Activated B cell treated with CpG ODN at 0.5 μM for 24 hours (primary cell): ENCODE measurements at regions of chr16 and their contacts with region 1.

Region 1: GRCh38 chr16:85986931-85987749 is 88.2 kb downstream of the IRF8 start:
- DNase-seq: peak; percentile 36
- ATAC-seq: no peak
- H3K4me3 Mint-ChIP-seq: peak overlapping the region; percentile 5
- H3K27ac Mint-ChIP-seq: peak overlapping the region; percentile 47
- H3K4me1 Mint-ChIP-seq: peaks cover 98% of the 10 kb centered on the region
- H3K27me3 Mint-ChIP-seq: no peaks in the 10 kb centered on the region
- CTCF ChIP-seq: no peak

Region 2: GRCh38 chr16:85829751-85830445 is 157.2 kb before region 1 on chr16:
- CTCF ChIA-PET with region 1: interaction called, 296 read pairs
- POLR2A ChIA-PET with region 1: interaction called, 5 read pairs
- intact Hi-C with region 1: no loop called
- DNase-seq: no peak
- ATAC-seq: no peak
- H3K4me3 Mint-ChIP-seq: peak overlapping the region; percentile 67
- H3K27ac Mint-ChIP-seq: peak overlapping the region; percentile 88
- H3K4me1 Mint-ChIP-seq: peaks cover 57% of the 10 kb centered on the region
- H3K27me3 Mint-ChIP-seq: no peaks in the 10 kb centered on the region
- CTCF ChIP-seq: no peak

Region 3: GRCh38 chr16:85935974-85936760 is 51.0 kb before region 1 on chr16:
- CTCF ChIA-PET with region 1: interaction called, 8 read pairs
- POLR2A ChIA-PET with region 1: interaction called, 42 read pairs
- intact Hi-C with region 1: loop called (anchors 1 kb)
- DNase-seq: peak; percentile 66
- ATAC-seq: peak; percentile 78
- H3K4me3 Mint-ChIP-seq: peak overlapping the region; percentile 75
- H3K27ac Mint-ChIP-seq: peak overlapping the region; percentile 98
- H3K4me1 Mint-ChIP-seq: peaks cover 90% of the 10 kb centered on the region
- H3K27me3 Mint-ChIP-seq: no peaks in the 10 kb centered on the region
- CTCF ChIP-seq: no peak

Region 4: GRCh38 chr16:85963753-85964285 is 23.3 kb before region 1 on chr16:
- CTCF ChIA-PET with region 1: interaction called, 4 read pairs
- POLR2A ChIA-PET with region 1: interaction called, 10 read pairs
- intact Hi-C with region 1: loop called (anchors 2 kb)
- DNase-seq: no peak
- ATAC-seq: no peak
- H3K4me3 Mint-ChIP-seq: no peak overlapping the region
- H3K27ac Mint-ChIP-seq: peak overlapping the region; percentile 41
- H3K4me1 Mint-ChIP-seq: peaks cover 53% of the 10 kb centered on the region
- H3K27me3 Mint-ChIP-seq: no peaks in the 10 kb centered on the region
- CTCF ChIP-seq: no peak

Region 5: DNA sequence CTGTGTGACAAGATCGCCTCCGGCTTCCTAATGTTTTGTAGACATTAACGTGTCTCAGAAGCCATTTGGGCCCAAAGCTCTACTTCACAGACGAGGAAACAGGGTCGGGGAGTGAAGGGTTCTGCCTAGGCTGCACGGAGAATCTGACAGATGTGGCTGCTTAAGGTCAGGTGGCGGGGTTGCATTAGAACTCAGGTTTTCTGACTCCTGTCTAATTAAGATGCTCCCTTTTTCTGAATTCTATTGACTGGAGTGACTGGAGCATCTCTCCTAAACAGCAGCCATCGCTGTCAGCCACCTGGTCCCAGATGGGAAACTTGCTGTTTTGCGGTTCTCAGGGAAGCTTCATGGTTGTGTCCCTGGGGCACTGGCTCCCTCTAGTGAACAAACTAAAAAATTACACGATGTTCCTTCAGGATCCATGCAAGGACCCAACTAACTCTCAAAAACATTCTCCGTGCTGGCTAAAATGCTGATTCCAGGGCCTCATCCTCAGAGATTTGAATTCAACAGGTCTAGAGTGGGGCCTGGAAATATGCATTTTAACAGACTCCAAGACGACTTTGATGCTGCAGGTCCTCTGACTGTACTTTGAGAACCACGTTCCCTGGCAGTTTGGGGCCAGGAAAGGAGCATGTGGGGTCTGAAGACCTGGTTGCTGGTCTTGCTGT is 29.2 kb after region 1 on chr16:
- CTCF ChIA-PET with region 1: interaction called, 32 read pairs
- POLR2A ChIA-PET with region 1: interaction called, 10 read pairs
- intact Hi-C with region 1: loop called (anchors 1 kb)
- DNase-seq: peak; percentile 32
- ATAC-seq: peak; percentile 60
- H3K4me3 Mint-ChIP-seq: no peak overlapping the region
- H3K27ac Mint-ChIP-seq: no peak overlapping the region
- H3K4me1 Mint-ChIP-seq: peaks cover 36% of the 10 kb centered on the region
- H3K27me3 Mint-ChIP-seq: peaks cover 6% of the 10 kb centered on the region
- CTCF ChIP-seq: no peak

Region 6: DNA sequence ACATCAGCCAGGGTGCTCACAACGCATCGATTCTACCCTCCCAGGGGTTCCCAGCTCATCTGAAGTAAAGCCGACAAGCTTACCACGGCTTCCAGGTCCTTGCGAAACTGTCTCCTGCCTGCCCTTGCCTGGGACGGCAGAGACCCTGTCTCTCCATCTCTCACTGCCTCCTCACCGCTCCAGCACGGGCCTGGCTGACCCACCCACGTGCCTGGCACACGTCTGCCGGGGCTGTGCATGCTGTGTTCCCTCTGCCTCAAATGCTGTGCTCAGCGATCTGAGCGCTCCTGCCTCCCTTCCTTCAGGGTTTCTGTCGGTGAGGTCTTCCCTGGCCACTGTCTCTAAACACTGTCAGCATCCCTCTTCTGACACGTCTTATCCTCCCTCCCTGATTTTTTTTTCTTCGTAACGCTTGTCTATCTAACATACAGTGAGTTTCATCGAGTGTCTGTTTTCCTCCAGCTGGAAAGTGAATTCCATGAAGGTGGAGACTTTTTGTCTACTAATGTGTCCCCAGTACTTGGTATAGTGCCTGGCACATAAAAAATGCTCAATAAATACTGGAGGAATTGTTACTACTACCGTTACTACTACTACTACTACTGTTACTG is 120.2 kb after region 1 on chr16:
- CTCF ChIA-PET with region 1: no interaction called
- POLR2A ChIA-PET with region 1: no interaction called
- intact Hi-C with region 1: no loop called
- DNase-seq: no peak
- ATAC-seq: no peak
- H3K4me3 Mint-ChIP-seq: no peak overlapping the region
- H3K27ac Mint-ChIP-seq: no peak overlapping the region
- H3K4me1 Mint-ChIP-seq: no peaks in the 10 kb centered on the region
- H3K27me3 Mint-ChIP-seq: no peaks in the 10 kb centered on the region
- CTCF ChIP-seq: no peak